ENCODE measurements at regions of chr19 and their contacts with region 1.

Region 1: GRCh38 chr19:40444192-40445028 is at the start of gene SERTAD3:
- DNase-seq: peak; percentile 97
- H3K4me3 ChIP-seq: peak within 1 kb of the TSS; percentile 52 to 98 (median 95)
- H3K27ac ChIP-seq: peak within 1 kb of the TSS; percentile 90
- H3K4me1 ChIP-seq: peaks cover 9% of the 10 kb centered on the region
- H3K27me3 ChIP-seq: no peaks in the 10 kb centered on the region
- CTCF ChIP-seq: peak in 1 of 2 donors; percentile 33
- POLR2A ChIP-seq: peak; percentile 68
- total RNA-seq, gene SERTAD3: 29.9 and 32.0 TPM in 2 replicates

Region 2: GRCh38 chr19:40285353-40286234 is 158.8 kb before region 1 on chr19:
- CTCF ChIA-PET with region 1: no interaction called
- POLR2A ChIA-PET with region 1: no interaction called
- dilution Hi-C with region 1: no loop called
- intact Hi-C with region 1: loop called (anchors 1 kb)
- DNase-seq: peak; percentile 100
- H3K4me3 ChIP-seq: peak overlapping the region in 2 of 3 experiments; percentile 40 to 86
- H3K27ac ChIP-seq: peak overlapping the region; percentile 76
- H3K4me1 ChIP-seq: peaks cover 11% of the 10 kb centered on the region
- H3K27me3 ChIP-seq: no peaks in the 10 kb centered on the region
- CTCF ChIP-seq: no peak
- POLR2A ChIP-seq: peak; percentile 43

Region 3: DNA sequence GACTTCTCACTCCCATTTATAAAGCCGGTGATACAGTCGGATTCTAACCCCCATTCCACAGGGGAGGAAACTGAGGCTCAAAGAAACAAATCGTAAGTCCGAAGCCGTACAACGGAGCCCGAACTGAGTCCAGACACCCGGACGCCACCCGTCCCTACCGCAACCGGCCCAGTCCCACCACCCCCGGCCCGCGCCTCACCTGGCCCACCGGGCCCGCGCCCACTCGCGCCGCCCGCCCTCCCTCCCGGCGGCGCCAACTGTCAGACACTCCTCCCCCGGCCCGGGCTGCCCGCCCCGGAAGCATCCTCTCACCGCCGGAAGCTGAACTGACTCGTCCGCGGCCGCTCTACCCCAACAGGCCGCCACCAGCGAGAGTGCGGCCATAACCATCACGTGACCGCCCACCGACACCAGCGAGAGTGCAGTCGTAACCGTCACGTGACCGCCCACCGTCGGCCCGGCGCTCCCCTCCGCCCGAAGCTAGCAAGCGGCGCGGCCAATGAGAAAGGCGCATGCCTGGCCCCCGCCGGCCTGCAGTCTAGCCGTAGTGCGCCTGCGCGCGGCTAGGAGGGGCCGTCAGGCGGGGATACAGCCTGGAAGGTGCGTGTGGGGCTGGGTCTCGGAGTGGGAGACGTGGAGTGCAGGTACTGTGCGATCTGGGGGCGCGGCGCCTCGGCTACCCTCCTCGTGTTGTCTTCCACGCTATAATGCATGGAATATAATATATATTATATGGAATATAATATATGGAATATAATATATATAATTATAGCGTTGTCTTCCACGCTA is 96.1 kb before region 1 on chr19 and contains the starts of genes C19orf47 and PLD3:
- CTCF ChIA-PET with region 1: no interaction called
- POLR2A ChIA-PET with region 1: no interaction called
- dilution Hi-C with region 1: no loop called
- intact Hi-C with region 1: loop called (anchors 1 kb)
- DNase-seq: peak; percentile 99
- H3K4me3 ChIP-seq: peak within 1 kb of the TSS; percentile 65 to 98 (median 95)
- H3K27ac ChIP-seq: peak within 1 kb of the TSS; percentile 83
- H3K4me1 ChIP-seq: peaks cover 13% of the 10 kb centered on the region
- H3K27me3 ChIP-seq: no peaks in the 10 kb centered on the region
- CTCF ChIP-seq: no peak
- POLR2A ChIP-seq: peak; percentile 98
- total RNA-seq, gene C19orf47: 16.4 and 17.3 TPM in 2 replicates
- total RNA-seq, gene PLD3: 166 and 172 TPM in 2 replicates

Region 4: GRCh38 chr19:40403262-40403984 is 41.0 kb before region 1 on chr19:
- CTCF ChIA-PET with region 1: interaction called, 4 read pairs
- POLR2A ChIA-PET with region 1: no interaction called
- dilution Hi-C with region 1: no loop called
- intact Hi-C with region 1: loop called (anchors 1 kb)
- DNase-seq: peak; percentile 90
- H3K4me3 ChIP-seq: peak overlapping the region; percentile 43 to 67 (median 47)
- H3K27ac ChIP-seq: no peak overlapping the region
- H3K4me1 ChIP-seq: peaks cover 2% of the 10 kb centered on the region
- H3K27me3 ChIP-seq: no peaks in the 10 kb centered on the region
- CTCF ChIP-seq: no peak
- POLR2A ChIP-seq: no peak

Region 5: DNA sequence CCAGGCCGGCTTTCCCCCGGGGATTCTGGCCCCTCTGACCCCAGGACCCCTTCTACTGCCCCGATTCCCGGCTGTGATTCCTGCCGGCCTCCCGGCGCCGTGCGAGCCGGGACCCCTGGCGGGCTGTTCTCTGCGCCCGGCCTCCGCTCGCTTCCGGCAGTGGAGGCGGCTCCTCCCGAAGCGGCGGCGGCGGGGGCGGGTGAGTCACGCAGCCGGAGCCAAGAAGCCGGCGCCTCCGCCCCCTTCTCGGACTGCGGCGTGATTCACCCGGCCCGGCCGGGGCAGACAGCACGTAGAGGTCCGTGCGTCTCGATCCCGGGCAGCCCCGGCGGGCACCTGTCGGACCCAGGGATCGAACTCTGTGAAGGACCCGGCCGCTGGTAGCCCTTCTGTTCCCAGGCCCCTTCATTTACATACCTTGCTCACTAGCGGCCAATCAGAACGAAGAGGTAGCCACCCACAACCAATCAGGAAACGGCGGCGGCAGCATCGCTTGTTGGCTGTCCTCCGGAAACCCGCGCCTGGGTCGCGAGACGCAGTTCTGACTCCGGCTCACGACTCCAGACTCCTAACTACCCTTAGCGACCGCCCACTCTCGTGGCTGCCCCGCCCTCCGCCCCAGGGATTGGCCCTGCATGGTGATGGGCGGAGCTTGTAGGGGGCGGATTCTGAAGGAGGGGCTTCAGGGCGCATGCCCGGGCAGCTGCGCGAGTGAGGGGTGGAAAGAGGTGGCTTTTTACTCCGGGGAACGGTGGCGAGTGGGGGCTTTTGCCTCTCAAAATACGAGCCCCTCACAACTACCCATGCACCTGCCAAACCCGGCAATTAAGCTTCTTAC is 18.7 kb before region 1 on chr19 and contains the start of gene SERTAD1:
- CTCF ChIA-PET with region 1: interaction called, 37 read pairs
- POLR2A ChIA-PET with region 1: interaction called, 15 read pairs
- dilution Hi-C with region 1: no loop called
- intact Hi-C with region 1: loop called (anchors 1 kb)
- DNase-seq: peak; percentile 99
- H3K4me3 ChIP-seq: peak within 1 kb of the TSS; percentile 80 to 95 (median 93)
- H3K27ac ChIP-seq: peak within 1 kb of the TSS; percentile 95
- H3K4me1 ChIP-seq: peaks cover 19% of the 10 kb centered on the region
- H3K27me3 ChIP-seq: no peaks in the 10 kb centered on the region
- CTCF ChIP-seq: peak; percentile 40 to 74
- POLR2A ChIP-seq: peak; percentile 99
- total RNA-seq, gene SERTAD1: 8.8 and 10.0 TPM in 2 replicates

Region 6: DNA sequence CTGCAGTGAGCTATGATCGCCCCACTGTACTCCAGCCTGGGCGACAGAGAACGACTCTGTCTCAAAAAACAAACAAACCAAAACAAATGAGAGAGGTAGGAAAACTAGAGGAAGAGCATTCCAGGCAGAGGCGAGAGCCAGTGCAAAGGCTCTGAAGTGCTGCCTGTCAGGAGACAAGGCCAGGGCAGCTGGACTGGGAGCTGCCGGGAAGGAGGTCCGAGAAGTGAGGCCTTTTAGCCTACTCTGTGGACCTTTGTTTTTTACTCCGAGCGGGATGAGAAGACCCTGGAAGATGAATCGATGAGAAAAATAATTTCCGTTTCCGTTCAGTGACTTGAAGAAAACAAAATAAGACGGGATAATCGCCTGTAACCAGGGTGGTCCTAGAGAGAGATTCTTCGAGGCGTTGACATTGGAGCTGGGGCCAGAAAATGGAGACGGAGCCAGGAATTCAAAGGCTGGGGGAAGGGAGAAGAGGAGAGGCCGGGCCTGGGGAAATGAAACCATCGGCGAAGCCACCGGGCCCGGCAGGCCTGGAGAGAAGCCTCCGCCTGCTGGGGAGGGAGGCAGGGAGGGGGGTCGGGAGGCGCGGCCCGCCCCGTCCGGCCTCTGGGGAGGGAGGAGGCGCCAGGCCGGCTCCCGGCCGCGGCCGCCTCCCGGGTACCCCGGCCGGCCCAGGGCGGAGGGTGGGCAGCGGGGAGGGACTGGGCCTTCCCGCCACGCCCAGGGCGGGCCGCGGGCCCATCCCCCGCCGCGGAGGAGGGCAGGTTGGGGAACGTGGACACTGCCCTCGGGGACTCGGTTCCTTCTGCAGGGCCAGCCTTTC is 10.8 kb before region 1 on chr19:
- CTCF ChIA-PET with region 1: interaction called, 10 read pairs
- POLR2A ChIA-PET with region 1: interaction called, 9 read pairs
- dilution Hi-C with region 1: no loop called
- intact Hi-C with region 1: loop called (anchors 1 kb)
- DNase-seq: peak; percentile 89
- H3K4me3 ChIP-seq: peak overlapping the region; percentile 28 to 76 (median 33)
- H3K27ac ChIP-seq: peak overlapping the region; percentile 97
- H3K4me1 ChIP-seq: peaks cover 13% of the 10 kb centered on the region
- H3K27me3 ChIP-seq: no peaks in the 10 kb centered on the region
- CTCF ChIP-seq: no peak
- POLR2A ChIP-seq: peak; percentile 90

Region 7: DNA sequence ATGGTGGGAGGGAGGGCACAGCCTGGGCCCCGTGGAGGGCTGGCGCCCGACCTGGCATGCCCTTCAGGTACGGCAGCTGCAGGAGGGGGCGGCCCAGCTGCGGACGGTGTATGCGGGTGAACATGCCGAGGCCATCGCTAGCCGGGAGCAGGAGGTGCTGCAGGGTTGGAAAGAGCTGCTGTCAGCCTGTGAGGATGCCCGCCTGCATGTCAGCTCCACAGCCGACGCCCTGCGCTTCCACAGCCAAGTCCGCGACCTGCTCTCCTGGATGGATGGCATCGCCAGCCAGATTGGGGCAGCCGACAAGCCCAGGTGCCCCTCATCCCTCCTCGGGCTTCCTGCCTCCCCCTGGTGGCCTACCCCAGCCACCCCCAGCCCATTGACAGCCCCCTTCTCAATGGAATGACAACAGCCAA is 115.7 kb after region 1 on chr19:
- CTCF ChIA-PET with region 1: no interaction called
- POLR2A ChIA-PET with region 1: no interaction called
- dilution Hi-C with region 1: no loop called
- intact Hi-C with region 1: no loop called
- DNase-seq: no peak
- H3K4me3 ChIP-seq: no peak overlapping the region
- H3K27ac ChIP-seq: no peak overlapping the region
- H3K4me1 ChIP-seq: no peaks in the 10 kb centered on the region
- H3K27me3 ChIP-seq: peaks cover 3 to 8% of the 10 kb centered on the region in 2 experiments
- CTCF ChIP-seq: no peak
- POLR2A ChIP-seq: no peak

Region 8: DNA sequence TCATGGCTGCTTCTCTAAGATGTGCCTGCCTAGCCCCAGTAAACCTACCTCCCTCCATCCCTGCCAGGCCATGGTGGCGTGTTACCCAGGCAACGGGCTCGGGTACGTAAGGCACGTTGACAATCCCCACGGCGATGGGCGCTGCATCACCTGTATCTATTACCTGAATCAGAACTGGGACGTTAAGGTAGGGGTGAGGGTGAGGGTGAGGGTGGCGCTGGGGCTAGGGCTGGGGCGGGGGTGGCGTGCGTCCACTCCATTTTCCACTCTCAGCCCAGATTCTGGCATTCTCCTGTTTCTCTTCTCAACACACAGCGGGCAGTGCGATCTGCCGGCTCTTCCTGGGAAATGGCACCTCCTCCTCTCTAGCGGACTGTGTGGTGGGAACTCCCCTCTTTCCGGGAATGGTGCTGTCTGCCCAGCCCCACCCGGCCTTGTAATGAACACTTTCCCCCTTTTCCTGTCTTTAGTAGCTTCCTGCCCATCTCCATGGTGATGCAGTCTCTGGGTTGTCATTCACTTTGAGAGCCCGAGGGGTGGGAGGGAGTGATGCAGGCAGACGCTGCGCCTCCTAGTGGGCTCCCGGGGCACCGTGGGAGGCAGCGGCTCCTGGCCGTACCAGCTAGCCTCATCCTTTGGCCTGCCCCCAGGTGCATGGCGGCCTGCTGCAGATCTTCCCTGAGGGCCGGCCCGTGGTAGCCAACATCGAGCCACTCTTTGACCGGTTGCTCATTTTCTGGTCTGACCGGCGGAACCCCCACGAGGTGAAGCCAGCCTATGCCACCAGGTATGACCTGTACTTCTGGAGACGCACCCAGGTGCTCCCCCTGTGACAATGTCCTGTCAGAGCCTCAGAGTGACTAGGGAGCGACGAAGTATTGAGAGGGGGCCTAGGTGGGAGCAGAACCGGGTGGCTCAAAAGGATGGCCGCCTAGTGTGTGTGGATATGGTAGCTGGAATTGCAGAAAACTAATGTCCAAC is 362.4 kb after region 1 on chr19:
- CTCF ChIA-PET with region 1: no interaction called
- POLR2A ChIA-PET with region 1: no interaction called
- dilution Hi-C with region 1: no loop called
- intact Hi-C with region 1: loop called (anchors 10 kb)
- DNase-seq: peak; percentile 99
- H3K4me3 ChIP-seq: peak overlapping the region in 1 of 3 experiments; percentile 9
- H3K27ac ChIP-seq: peak overlapping the region; percentile 35
- H3K4me1 ChIP-seq: peaks cover 63% of the 10 kb centered on the region
- H3K27me3 ChIP-seq: peaks cover 0 to under 1% of the 10 kb centered on the region in 2 experiments
- CTCF ChIP-seq: peak; percentile 99
- POLR2A ChIP-seq: peak; percentile 29